ENCODE measurements at regions of chr13 and their contacts with region 1.

Region 1: GRCh38 chr13:50401049-50401505 is 385.8 kb downstream of the KCNRG start:
- DNase-seq: peak in 4 of 10 donors; percentile 27 to 47 (median 46)

Region 2: DNA sequence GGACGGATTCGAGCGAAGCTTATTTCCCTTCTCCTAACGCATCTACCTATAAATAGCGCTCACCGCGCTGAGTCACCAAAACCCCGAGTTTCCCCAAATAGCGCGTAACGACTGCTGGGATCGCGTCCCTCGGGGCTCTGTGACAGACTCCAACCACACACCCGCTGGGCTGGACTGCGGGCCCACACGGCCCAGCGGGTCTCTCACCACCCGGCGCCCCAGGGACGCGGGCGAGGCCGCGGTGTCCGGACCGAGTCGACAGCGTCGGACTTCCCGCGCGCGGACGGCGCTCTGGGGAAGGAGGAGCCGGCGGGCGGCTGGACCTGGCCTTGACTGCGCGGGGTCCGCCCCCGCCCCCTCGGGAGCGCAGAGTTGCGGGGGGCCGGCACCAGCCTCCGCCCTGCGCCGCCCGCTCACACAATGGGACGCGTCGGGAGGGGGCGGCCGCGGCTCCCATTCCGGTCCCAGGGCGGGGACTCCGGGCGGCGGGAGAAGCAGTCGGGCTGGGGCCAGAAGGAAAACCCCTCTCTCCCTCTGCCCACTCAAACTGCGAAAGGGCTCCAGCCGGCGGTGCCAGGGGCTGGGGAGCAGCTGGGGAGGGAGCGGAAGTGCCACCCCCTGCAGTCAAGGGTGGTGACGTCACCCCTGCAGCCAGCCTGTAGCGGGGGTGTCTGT is 277.1 kb before region 1 on chr13:
- intact Hi-C with region 1: loop called (anchors 10 kb)
- DNase-seq: peak in 8 of 10 donors; percentile 34 to 99 (median 84)

Measured in posterior cingulate gyrus (tissue), 11 donors.